Panc1 (cell line): ENCODE measurements at regions of chr2 and their contacts with region 1.

Region 1: DNA sequence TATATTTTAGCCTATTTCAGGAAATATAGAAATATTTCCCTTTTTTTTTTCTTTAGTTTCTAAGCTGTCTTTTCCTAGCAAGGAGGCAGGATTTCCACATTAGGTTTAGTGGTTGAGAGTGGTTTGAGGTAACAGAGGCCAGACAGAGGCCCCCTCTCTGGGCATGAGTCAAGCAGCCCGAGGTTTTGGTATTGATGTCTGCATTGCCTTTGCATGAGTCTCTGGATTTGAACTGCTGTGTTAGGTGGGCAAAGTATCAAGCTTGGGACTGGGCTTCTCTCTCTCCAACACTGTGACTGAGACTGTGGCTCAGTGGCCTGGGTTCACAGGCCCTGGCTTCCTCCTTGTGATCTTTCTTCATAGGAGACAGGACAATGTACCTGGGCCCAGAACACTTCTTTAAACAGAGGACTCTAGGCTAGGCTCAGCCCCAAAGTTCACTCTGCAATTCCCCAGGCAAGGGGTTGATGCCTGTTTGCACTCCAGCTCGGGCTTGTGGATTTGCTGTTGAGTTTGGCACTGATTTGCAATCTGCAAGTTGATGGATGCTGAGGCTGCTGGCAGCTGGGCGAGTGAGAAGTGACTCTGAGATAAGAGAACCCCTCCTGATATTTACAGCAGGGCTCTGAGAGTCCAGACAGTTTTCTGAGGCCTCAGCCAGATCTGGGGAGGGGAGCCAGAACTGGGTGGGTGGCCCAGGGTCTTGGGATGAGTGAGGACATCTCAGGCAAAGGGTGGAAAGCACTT is 271.2 kb downstream of the EN1 start:
- DNase-seq: no peak
- ATAC-seq: no peak
- H3K4me3 ChIP-seq: no peak overlapping the region
- H3K27ac ChIP-seq: no peak overlapping the region
- H3K4me1 ChIP-seq: no peaks in the 10 kb centered on the region
- H3K27me3 ChIP-seq: no peaks in the 10 kb centered on the region
- CTCF ChIP-seq: no peak

Region 2: DNA sequence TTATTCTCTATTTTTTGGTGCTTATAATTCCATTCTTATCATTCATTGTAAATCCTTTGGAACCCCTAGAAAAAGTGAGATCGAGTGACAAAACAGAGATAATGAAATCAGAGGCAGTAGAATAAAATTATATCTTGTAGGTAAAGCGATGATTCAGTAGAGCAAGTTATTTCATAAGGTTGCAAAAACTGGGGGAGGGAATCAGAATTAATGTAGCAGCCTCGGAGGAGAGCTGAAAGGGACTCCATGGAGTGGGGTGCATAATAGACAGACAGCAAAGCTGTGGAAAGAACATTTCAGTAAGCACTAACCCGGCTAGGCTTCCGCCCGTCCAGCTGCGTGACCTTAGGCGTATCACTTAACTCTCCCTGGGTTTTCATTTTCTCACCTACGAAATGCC is 18.5 kb before region 1 on chr2:
- CTCF ChIA-PET with region 1: no interaction called
- POLR2A ChIA-PET with region 1: no interaction called
- in situ Hi-C with region 1: no loop called
- intact Hi-C with region 1: loop called (anchors 1 kb)
- DNase-seq: no peak
- ATAC-seq: no peak
- H3K4me3 ChIP-seq: no peak overlapping the region
- H3K27ac ChIP-seq: no peak overlapping the region
- H3K4me1 ChIP-seq: no peaks in the 10 kb centered on the region
- H3K27me3 ChIP-seq: no peaks in the 10 kb centered on the region
- CTCF ChIP-seq: no peak

Region 3: DNA sequence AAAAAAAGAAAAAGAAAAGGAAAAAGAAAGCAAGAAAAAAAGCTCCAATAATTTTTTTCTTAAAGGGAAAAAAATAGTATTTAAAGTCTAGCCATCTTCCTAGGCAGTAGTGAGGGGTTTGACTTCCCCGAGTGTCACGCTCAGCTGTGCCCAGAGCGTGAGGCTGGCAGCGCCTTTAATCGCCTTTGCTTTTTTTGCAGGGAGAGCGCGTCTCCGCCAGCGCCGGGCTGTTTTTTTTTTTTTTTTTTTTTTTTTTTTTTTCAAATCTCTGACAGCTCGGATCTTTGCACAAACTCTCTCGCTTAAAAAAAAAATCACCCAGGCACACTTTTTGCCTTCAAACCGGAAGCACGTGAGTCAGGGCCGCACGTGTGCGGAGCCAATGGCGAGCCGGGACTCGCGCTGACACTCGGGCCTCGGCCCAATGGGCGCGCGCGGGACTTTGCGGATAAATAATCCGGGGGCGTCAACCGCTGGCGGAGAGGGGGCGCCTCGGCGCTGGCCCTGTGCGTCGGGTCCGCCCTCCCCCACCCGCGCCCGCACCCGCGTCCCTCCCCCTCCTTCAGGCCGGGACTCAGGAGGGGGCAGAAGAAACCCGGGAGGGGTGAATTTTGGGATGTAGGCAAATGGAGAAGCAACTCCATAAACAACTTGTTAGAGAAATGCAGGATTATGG is 271.4 kb after region 1 on chr2 and contains the start of gene EN1:
- CTCF ChIA-PET with region 1: no interaction called
- POLR2A ChIA-PET with region 1: no interaction called
- in situ Hi-C with region 1: no loop called
- intact Hi-C with region 1: no loop called
- DNase-seq: no peak
- ATAC-seq: peak; percentile 69
- H3K4me3 ChIP-seq: peak within 1 kb of the TSS; percentile 37 to 45
- H3K27ac ChIP-seq: no peak within 1 kb of the TSS
- H3K4me1 ChIP-seq: no peaks in the 10 kb centered on the region; the same call in 1 of the 2 replicates
- H3K27me3 ChIP-seq: peaks cover 7% of the 10 kb centered on the region; the same call in 1 of the 2 replicates
- CTCF ChIP-seq: no peak
- total RNA-seq, gene EN1: 0.26 TPM